Mucosa of descending colon (tissue), 3 donors: ENCODE measurements at regions of chr7 and their contacts with region 1.

Region 1: GRCh38 chr7:132580717-132581285 is 4.5 kb upstream of the PLXNA4 start:
- DNase-seq: peak in 2 of 3 donors; percentile 64 to 67
- ATAC-seq: peak; percentile 83
- H3K4me3 ChIP-seq: no peak overlapping the region
- H3K4me1 ChIP-seq: peaks cover 4% of the 10 kb centered on the region
- CTCF ChIP-seq: peak; percentile 48

Region 2: DNA sequence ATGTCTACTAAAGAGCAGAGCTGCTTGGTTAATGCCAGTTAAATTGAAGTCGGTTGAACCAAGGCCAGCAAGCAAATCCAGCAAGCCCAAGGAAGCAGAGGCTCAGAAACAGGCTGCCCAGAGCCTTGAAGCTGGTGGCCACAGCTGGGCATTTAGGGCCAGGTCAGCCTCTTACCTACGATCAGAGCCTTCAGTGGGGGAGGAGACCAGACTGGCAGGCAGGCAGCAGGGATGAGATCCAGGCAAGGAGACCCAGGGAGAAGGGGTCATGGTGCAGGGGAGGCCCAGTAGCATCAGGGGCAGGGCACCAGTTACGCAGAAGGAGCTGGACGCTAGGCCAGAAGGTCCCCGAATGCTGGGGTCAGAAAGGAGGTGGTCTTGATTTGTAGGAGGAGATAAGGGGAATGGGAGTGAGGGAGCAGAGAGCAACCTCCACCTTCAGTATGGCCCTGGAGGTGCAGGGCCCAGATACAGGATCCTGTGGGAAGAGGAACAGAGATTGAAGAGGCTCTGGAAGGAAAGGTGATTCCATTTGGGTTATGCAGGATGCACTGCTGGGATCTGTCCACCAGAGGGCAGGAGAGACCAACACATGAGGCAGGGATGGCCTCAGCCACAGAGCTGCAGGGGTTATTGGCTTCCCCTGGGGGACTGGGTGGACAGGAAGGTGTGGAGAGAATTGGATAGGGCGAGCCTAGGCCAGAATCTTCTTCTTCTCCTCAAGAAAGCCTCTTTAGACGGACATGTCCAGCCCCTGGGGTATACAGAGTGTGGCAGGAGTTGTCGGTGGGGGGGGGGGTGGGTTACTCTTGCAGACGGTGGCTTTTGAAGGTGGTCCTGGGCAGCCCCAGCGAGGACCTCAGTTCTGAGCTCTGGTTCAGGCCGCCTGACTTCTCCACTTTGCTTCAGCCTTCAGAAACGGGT is 891.8 kb before region 1 on chr7:
- intact Hi-C with region 1: loop called in 1 of 2 experiments (anchors 10 kb)
- DNase-seq: peak in 2 of 3 donors; percentile 72
- ATAC-seq: peak; percentile 79
- H3K4me3 ChIP-seq: no peak overlapping the region
- H3K4me1 ChIP-seq: peaks cover 7% of the 10 kb centered on the region
- CTCF ChIP-seq: peak; percentile 86

Region 3: GRCh38 chr7:132318352-132319318 is 262.2 kb before region 1 on chr7:
- intact Hi-C with region 1: loop called (anchors 5 kb)
- DNase-seq: peak; percentile 74 to 89 (median 85)
- ATAC-seq: peak; percentile 95
- H3K4me3 ChIP-seq: no peak overlapping the region
- H3K4me1 ChIP-seq: peaks cover 11% of the 10 kb centered on the region
- CTCF ChIP-seq: peak; percentile 77

Region 4: DNA sequence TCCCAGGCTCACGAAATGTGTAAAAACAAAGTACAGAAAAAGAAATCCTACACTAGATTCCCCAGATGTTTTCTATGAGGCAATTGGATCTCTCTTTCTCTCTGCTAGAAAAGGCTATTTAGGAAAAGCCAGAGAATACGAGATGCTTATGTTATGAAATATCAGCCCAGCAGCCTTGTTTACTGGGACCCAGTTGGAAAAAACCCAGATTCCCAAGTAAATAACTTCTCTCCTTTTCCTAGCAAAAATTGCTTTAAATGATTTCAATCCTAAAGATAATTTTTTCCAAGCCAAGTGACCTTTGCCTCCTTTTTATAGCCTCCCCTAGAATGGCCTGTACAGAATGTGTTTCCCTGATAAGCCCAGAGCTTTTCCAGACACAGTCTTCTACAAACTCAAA is 203.8 kb before region 1 on chr7:
- intact Hi-C with region 1: no loop called
- DNase-seq: no peak
- ATAC-seq: peak; percentile 65
- H3K4me3 ChIP-seq: no peak overlapping the region
- H3K4me1 ChIP-seq: peaks cover 27% of the 10 kb centered on the region
- CTCF ChIP-seq: no peak

Region 5: DNA sequence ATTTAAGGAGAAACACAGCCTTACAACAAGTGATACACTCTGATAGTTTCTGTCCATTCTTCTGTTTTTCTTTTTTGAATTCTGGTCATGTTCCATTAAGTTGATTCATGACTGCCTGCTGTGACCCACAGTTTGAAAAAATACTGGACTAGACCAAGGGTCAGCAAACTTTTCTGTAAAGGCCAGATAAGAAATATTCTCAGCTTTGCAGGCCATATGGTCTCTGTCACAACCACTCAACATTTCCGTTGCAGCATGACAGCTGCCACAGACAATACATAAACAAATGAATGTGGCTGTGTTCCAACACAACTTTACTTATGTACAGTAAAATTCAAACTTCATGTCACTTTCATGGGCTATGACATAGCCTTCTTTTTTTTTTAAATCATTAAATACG is 161.3 kb before region 1 on chr7:
- intact Hi-C with region 1: no loop called
- DNase-seq: no peak
- ATAC-seq: no peak
- H3K4me3 ChIP-seq: no peak overlapping the region
- H3K4me1 ChIP-seq: no peaks in the 10 kb centered on the region
- CTCF ChIP-seq: no peak